ENCODE measurements at regions of chr1 and their contacts with region 1.

Region 1: GRCh38 chr1:24642481-24643361 is at the start of gene SRRM1:
- DNase-seq: peak; percentile 99
- ATAC-seq: peak; percentile 93
- H3K4me3 Mint-ChIP-seq: peak within 1 kb of the TSS; percentile 80
- H3K27ac Mint-ChIP-seq: peak within 1 kb of the TSS; percentile 98
- H3K4me1 Mint-ChIP-seq: peaks cover 54% of the 10 kb centered on the region
- H3K27me3 Mint-ChIP-seq: no peaks in the 10 kb centered on the region
- total RNA-seq, gene SRRM1: 234 to 288 TPM

Region 2: DNA sequence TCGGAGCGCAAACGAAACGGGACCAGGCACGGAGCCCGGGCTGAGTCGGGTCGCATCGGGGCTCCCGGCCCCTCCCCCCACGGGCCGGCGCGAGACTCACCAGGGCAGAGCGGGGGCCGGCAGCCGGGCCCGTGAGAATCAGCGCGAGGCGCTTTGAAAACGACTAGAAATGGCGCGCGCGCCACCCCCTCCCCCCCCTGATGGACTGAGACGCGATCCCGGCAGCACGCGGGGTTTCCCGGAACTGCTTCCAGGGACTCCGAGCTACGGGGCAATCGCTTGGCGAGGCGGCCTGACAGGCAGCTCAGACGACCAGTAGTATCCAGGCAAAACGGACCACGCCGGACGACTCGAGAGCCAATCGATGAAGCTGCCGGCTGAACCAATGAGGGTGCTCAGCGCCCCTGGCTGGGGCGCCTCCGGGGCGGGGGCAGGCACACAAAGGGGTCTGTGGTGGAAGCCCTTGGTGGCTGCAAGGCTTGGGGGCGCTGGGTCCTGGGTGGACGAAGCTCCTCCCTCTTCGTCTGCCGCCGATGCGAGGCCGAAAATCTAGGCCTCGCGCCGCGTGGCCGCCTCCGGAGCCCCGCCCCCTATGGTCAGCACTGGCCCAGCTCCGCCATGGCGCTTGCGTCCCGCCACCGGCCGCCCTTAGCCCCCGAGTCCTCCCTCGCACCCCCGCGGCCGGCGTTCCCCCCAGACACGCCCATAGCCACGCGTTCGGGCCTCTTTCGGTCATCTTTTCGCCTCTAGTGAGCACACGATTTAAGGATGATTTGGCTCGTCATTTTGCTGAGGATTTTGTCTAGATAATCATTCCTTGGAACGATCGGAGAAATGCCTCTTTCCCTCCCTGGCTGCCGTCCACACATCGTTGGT is 1298.4 kb before region 1 on chr1 and contains the start of gene HNRNPR:
- CTCF ChIA-PET with region 1: no interaction called
- POLR2A ChIA-PET with region 1: no interaction called
- intact Hi-C with region 1: loop called in 1 of 2 experiments (anchors 10 kb)
- DNase-seq: peak; percentile 100
- ATAC-seq: peak; percentile 97
- H3K4me3 Mint-ChIP-seq: peak within 1 kb of the TSS; percentile 85
- H3K27ac Mint-ChIP-seq: peak within 1 kb of the TSS; percentile 96
- H3K4me1 Mint-ChIP-seq: peaks cover 35% of the 10 kb centered on the region
- H3K27me3 Mint-ChIP-seq: no peaks in the 10 kb centered on the region
- total RNA-seq, gene HNRNPR: 190 to 210 TPM

Region 3: GRCh38 chr1:23979878-23980724 is 662.6 kb before region 1 on chr1 and contains the start of gene SRSF10:
- CTCF ChIA-PET with region 1: no interaction called
- POLR2A ChIA-PET with region 1: no interaction called
- intact Hi-C with region 1: loop called (anchors 1 to 10 kb)
- DNase-seq: peak; percentile 99
- ATAC-seq: peak; percentile 94
- H3K4me3 Mint-ChIP-seq: peak within 1 kb of the TSS; percentile 97
- H3K27ac Mint-ChIP-seq: peak within 1 kb of the TSS; percentile 100
- H3K4me1 Mint-ChIP-seq: peaks cover 38% of the 10 kb centered on the region
- H3K27me3 Mint-ChIP-seq: no peaks in the 10 kb centered on the region
- total RNA-seq, gene SRSF10: 213 to 225 TPM

Region 4: GRCh38 chr1:24415334-24415909 is 227.3 kb before region 1 on chr1 and contains the start of gene NIPAL3:
- CTCF ChIA-PET with region 1: interaction called, 4 read pairs
- POLR2A ChIA-PET with region 1: no interaction called
- intact Hi-C with region 1: loop called (anchors 1 kb)
- DNase-seq: peak; percentile 99
- ATAC-seq: peak; percentile 94
- H3K4me3 Mint-ChIP-seq: peak within 1 kb of the TSS; percentile 98
- H3K27ac Mint-ChIP-seq: peak within 1 kb of the TSS; percentile 97
- H3K4me1 Mint-ChIP-seq: peaks cover 57% of the 10 kb centered on the region
- H3K27me3 Mint-ChIP-seq: no peaks in the 10 kb centered on the region
- total RNA-seq, gene NIPAL3: 38.1 to 41.4 TPM

Region 5: GRCh38 chr1:24541711-24542346 is 100.9 kb before region 1 on chr1:
- CTCF ChIA-PET with region 1: no interaction called
- POLR2A ChIA-PET with region 1: interaction called, 4 read pairs
- intact Hi-C with region 1: loop called (anchors 1 to 2 kb)
- DNase-seq: peak; percentile 68
- ATAC-seq: no peak
- H3K4me3 Mint-ChIP-seq: peak overlapping the region; percentile 48
- H3K27ac Mint-ChIP-seq: peak overlapping the region; percentile 93
- H3K4me1 Mint-ChIP-seq: peaks cover 69% of the 10 kb centered on the region
- H3K27me3 Mint-ChIP-seq: no peaks in the 10 kb centered on the region

Region 6: DNA sequence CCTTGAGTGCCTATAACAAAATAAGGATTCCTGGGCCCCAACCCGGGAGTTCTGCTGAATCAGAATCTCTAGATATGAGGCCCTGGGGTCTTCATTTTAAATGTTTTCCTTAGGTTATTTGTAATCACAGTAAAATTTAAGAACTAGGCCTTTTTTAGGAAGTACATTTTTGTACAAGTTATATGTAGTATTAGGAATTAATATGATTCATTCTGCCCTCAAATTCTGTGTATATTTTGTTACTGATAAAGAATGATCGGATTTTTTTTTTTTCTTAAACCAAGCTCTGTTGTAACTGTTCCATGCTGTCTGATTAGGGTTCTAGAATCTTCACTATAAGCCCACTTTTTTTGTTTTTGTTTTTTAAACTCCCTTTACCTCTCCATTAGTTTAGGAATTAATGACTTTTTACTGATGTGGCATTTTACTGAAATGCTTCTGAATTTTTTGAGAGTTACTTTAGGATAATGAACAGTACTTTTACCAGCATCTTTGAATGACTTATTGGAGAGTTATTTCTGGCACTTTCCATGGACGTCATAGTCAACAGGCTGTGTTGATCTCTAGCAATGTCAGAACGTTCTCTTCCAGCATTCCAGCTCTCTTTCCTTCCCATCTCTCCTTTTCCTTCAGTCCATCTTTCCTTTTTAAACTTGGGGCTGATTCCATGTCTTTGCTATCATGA is 150.9 kb after region 1 on chr1:
- CTCF ChIA-PET with region 1: no interaction called
- POLR2A ChIA-PET with region 1: no interaction called
- intact Hi-C with region 1: no loop called
- DNase-seq: no peak
- ATAC-seq: no peak
- H3K4me3 Mint-ChIP-seq: no peak overlapping the region
- H3K27ac Mint-ChIP-seq: no peak overlapping the region
- H3K4me1 Mint-ChIP-seq: no peaks in the 10 kb centered on the region
- H3K27me3 Mint-ChIP-seq: no peaks in the 10 kb centered on the region

Region 7: GRCh38 chr1:24930204-24931145 is 287.8 kb after region 1 on chr1 and contains the start of gene RUNX3:
- CTCF ChIA-PET with region 1: no interaction called
- POLR2A ChIA-PET with region 1: no interaction called
- intact Hi-C with region 1: loop called in 1 of 2 experiments (anchors 1 kb)
- DNase-seq: peak; percentile 96
- ATAC-seq: peak; percentile 88
- H3K4me3 Mint-ChIP-seq: peak within 1 kb of the TSS; percentile 80
- H3K27ac Mint-ChIP-seq: peak within 1 kb of the TSS; percentile 91
- H3K4me1 Mint-ChIP-seq: peaks cover 66% of the 10 kb centered on the region
- H3K27me3 Mint-ChIP-seq: no peaks in the 10 kb centered on the region
- total RNA-seq, gene RUNX3: 156 to 167 TPM

Region 8: GRCh38 chr1:25338188-25338981 is 695.7 kb after region 1 on chr1 and contains the start of gene TMEM50A:
- CTCF ChIA-PET with region 1: no interaction called
- POLR2A ChIA-PET with region 1: no interaction called
- intact Hi-C with region 1: loop called in 1 of 2 experiments (anchors 10 kb)
- DNase-seq: peak; percentile 93
- ATAC-seq: peak; percentile 76
- H3K4me3 Mint-ChIP-seq: peak within 1 kb of the TSS; percentile 94
- H3K27ac Mint-ChIP-seq: peak within 1 kb of the TSS; percentile 93
- H3K4me1 Mint-ChIP-seq: peaks cover 31% of the 10 kb centered on the region
- H3K27me3 Mint-ChIP-seq: no peaks in the 10 kb centered on the region
- total RNA-seq, gene TMEM50A: 98.0 to 120 TPM